ENCODE measurements at regions of chr1 and their contacts with region 1.

Region 1: DNA sequence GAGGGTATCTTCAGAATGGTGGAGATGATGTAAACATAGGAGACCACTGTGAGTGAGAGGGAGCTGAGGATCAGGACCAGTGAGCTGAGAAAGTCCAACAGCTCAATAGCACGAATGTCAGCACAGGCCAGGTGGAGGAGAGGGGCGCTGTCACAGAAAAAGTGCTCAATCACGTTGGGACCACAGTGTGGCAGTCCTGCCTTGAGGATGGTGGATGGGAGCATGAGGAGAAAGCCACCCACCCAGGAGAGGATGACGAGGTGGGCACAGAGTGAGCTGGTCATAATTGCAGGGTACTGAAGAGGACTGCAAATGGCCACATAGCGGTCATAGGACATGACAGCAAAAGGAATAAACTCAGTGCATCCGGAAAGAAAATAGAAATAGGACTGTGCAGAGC is 8.1 kb downstream of the OR11L1 start:
- DNase-seq: peak in 2 of 4 experiments; percentile 39 to 55
- ATAC-seq: peak; percentile 91
- H3K4me3 ChIP-seq: no peak overlapping the region
- H3K27ac ChIP-seq: no peak overlapping the region
- H3K4me1 ChIP-seq: no peaks in the 10 kb centered on the region
- H3K27me3 ChIP-seq: peaks cover 0 to 14% of the 10 kb centered on the region in 2 experiments; a peak in 1 of 5 replicates
- CTCF ChIP-seq: peak; percentile 64 to 95 (median 87)
- EP300 ChIP-seq: no peak
- POLR2A ChIP-seq: no peak
- RAD21 ChIP-seq: peak; percentile 65 to 80

Region 2: GRCh38 chr1:247102381-247102780 is 731.2 kb before region 1 on chr1:
- CTCF ChIA-PET with region 1: no interaction called
- POLR2A ChIA-PET with region 1: no interaction called
- in situ Hi-C with region 1: no loop called
- intact Hi-C with region 1: no loop called
- DNase-seq: no peak
- ATAC-seq: no peak
- H3K4me3 ChIP-seq: no peak overlapping the region
- H3K27ac ChIP-seq: no peak overlapping the region
- H3K4me1 ChIP-seq: peaks cover 9 to 11% of the 10 kb centered on the region in 2 experiments
- H3K27me3 ChIP-seq: no peaks in the 10 kb centered on the region
- CTCF ChIP-seq: no peak
- EP300 ChIP-seq: no peak
- POLR2A ChIP-seq: no peak
- RAD21 ChIP-seq: no peak

Region 3: GRCh38 chr1:247760456-247760855 is 73.1 kb before region 1 on chr1 and contains the start of gene OR1C1:
- CTCF ChIA-PET with region 1: no interaction called
- POLR2A ChIA-PET with region 1: no interaction called
- in situ Hi-C with region 1: no loop called
- intact Hi-C with region 1: no loop called
- DNase-seq: no peak
- ATAC-seq: no peak
- H3K4me3 ChIP-seq: no peak within 1 kb of the TSS
- H3K27ac ChIP-seq: no peak within 1 kb of the TSS
- H3K4me1 ChIP-seq: no peaks in the 10 kb centered on the region
- H3K27me3 ChIP-seq: no peaks in the 10 kb centered on the region
- CTCF ChIP-seq: no peak
- EP300 ChIP-seq: no peak
- POLR2A ChIP-seq: no peak
- RAD21 ChIP-seq: no peak
- polyA plus RNA-seq, gene OR1C1: not detected

Region 4: DNA sequence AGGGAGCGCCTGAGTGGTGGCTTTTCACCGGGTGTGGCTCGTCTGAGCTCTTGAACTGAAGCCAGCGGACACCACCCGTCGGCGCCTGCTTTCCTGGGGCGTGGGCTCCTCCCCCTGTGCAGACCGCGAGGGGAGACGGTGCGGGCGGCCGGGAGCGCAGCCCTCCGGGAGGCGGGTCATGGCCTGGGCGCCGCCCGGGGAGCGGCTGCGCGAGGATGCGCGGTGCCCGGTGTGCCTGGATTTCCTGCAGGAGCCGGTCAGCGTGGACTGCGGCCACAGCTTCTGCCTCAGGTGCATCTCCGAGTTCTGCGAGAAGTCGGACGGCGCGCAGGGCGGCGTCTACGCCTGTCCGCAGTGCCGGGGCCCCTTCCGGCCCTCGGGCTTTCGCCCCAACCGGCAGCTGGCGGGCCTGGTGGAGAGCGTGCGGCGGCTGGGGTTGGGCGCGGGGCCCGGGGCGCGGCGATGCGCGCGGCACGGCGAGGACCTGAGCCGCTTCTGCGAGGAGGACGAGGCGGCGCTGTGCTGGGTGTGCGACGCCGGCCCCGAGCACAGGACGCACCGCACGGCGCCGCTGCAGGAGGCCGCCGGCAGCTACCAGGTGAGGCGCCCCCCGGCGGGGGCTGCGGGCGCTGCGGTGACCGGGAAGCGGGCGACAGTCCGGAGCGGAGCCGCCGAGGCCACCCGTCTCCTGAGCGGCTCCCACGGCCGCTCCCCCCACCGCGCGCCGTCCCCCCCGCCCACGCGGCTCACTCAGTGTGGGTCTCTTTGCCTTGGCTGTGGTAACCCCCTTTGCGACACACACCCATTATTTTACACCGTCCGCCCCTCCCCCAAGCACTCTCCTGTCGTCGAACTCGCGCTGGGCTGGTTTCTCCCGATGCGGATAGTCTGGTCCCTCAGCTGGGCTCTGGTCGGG is 23.7 kb after region 1 on chr1 and contains the start of gene TRIM58:
- CTCF ChIA-PET with region 1: no interaction called
- POLR2A ChIA-PET with region 1: interaction called, 3 read pairs
- in situ Hi-C with region 1: no loop called
- intact Hi-C with region 1: loop called (anchors 2 kb)
- DNase-seq: peak; percentile 92 to 96 (median 94)
- ATAC-seq: peak; percentile 88
- H3K4me3 ChIP-seq: peak within 1 kb of the TSS; percentile 84
- H3K27ac ChIP-seq: peak within 1 kb of the TSS; percentile 88
- H3K4me1 ChIP-seq: peaks cover 34 to 37% of the 10 kb centered on the region in 2 experiments
- H3K27me3 ChIP-seq: no peaks in the 10 kb centered on the region
- CTCF ChIP-seq: peak; percentile 56 to 98 (median 83)
- EP300 ChIP-seq: peak; percentile 57
- POLR2A ChIP-seq: peak; percentile 86
- RAD21 ChIP-seq: peak; percentile 54 to 55
- polyA plus RNA-seq, gene TRIM58: 3.8 to 5.8 TPM

Region 5: DNA sequence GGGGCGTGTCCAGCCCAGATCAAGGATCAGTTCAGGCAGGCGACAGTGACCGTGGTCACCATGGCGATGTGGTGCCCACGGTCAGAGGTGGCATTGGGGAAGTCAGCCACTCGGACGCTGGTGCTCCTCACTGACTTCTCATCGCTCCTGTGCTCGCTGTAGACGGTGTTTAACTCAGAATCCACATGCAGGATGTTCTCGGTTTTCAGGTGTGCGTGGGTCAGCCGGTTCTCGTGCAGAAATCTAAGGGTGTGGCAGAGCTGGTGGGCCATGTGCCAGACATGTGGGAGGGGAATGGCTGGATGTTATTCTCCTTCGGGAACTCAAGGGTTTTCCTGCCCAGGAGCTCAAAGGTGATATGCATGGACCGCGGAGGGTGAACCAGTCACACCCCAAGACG is 102.8 kb after region 1 on chr1:
- CTCF ChIA-PET with region 1: no interaction called
- POLR2A ChIA-PET with region 1: interaction called, 3 read pairs
- in situ Hi-C with region 1: no loop called
- intact Hi-C with region 1: loop called (anchors 5 kb)
- DNase-seq: no peak
- ATAC-seq: no peak
- H3K4me3 ChIP-seq: no peak overlapping the region
- H3K27ac ChIP-seq: no peak overlapping the region
- H3K4me1 ChIP-seq: peaks cover 0 to 11% of the 10 kb centered on the region in 2 experiments; a peak in 2 of 5 replicates
- H3K27me3 ChIP-seq: no peaks in the 10 kb centered on the region
- CTCF ChIP-seq: no peak
- EP300 ChIP-seq: no peak
- POLR2A ChIP-seq: no peak
- RAD21 ChIP-seq: no peak

Region 6: GRCh38 chr1:248098529-248098928 is 264.9 kb after region 1 on chr1:
- CTCF ChIA-PET with region 1: no interaction called
- POLR2A ChIA-PET with region 1: no interaction called
- in situ Hi-C with region 1: no loop called
- intact Hi-C with region 1: no loop called
- DNase-seq: no peak
- ATAC-seq: no peak
- H3K4me3 ChIP-seq: no peak overlapping the region
- H3K27ac ChIP-seq: no peak overlapping the region
- H3K4me1 ChIP-seq: no peaks in the 10 kb centered on the region
- H3K27me3 ChIP-seq: no peaks in the 10 kb centered on the region
- CTCF ChIP-seq: no peak
- EP300 ChIP-seq: no peak
- POLR2A ChIP-seq: no peak
- RAD21 ChIP-seq: no peak

Region 7: DNA sequence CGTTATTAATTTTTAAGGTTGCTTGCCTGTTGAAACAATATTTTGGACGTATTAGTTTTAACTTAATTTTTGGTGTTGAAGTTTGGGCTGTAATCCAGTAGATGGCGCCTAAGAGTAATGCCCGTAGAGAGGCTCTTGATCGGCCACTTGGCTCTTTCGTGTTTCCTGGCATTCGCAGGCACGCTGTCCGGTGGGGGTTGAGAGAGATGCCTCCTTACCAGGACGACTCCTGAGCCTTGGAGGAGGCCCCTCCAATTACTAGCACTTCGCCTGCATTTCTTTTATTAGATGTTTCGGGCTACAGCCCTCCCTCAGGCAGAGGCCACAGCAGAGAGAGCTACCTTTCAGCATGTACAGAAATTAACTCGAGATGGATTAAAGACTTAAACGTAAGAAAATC is 409.6 kb after region 1 on chr1:
- CTCF ChIA-PET with region 1: no interaction called
- POLR2A ChIA-PET with region 1: no interaction called
- in situ Hi-C with region 1: no loop called
- intact Hi-C with region 1: loop called (anchors 10 kb)
- DNase-seq: peak; percentile 23 to 37 (median 30)
- ATAC-seq: peak; percentile 66; the same call in 2 of the 3 replicates
- H3K4me3 ChIP-seq: no peak overlapping the region
- H3K27ac ChIP-seq: no peak overlapping the region
- H3K4me1 ChIP-seq: no peaks in the 10 kb centered on the region
- H3K27me3 ChIP-seq: no peaks in the 10 kb centered on the region
- CTCF ChIP-seq: peak; percentile 53 to 77 (median 62)
- EP300 ChIP-seq: no peak
- POLR2A ChIP-seq: no peak
- RAD21 ChIP-seq: peak; percentile 63 to 73

Measured in K562 (cell line).